ENCODE measurements at regions of chr4 and their contacts with region 1.

Region 1: GRCh38 chr4:173457893-173458292 is 59.0 kb upstream of the SCRG1 start:
- DNase-seq: no peak
- H3K4me3 ChIP-seq: no peak overlapping the region
- H3K27ac ChIP-seq: no peak overlapping the region
- H3K4me1 ChIP-seq: no peaks in the 10 kb centered on the region
- H3K27me3 ChIP-seq: no peaks in the 10 kb centered on the region
- CTCF ChIP-seq: no peak
- POLR2A ChIP-seq: no peak

Region 2: DNA sequence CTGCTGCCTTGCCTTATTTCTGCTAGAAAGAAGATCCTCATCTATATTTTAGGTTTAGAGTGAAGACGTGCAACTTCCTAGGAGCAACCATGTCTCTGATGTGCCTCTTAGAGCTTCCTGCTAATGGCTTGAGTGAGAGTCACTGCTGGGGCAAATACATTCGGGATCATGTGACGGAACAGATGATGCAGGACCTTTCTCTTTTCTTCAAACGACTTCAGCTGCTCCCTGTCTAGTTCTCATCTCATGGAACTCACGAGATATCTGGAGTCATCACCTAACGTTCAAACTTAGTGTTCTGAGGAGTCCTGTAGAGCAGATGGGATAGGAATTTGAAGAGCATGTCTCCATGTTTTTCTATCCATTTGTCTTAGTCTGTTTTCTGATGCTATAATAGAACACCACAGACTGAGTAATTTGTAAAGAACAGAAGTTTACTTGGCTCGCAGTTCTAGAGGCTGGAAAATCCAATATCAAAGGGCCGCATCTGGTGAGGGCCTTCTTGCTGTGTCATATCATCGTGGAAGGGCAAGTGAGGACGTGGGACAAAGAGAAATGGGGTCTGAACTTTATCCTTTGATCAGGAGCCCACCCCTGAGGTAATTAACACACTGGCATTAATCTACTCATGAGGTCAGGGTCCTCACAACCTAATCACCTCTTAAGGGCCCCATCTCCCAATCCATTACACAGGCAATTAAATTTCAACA is 15.5 kb before region 1 on chr4:
- CTCF ChIA-PET with region 1: no interaction called
- POLR2A ChIA-PET with region 1: no interaction called
- dilution Hi-C with region 1: no loop called
- intact Hi-C with region 1: loop called (anchors 2 kb)
- DNase-seq: no peak
- H3K4me3 ChIP-seq: no peak overlapping the region
- H3K27ac ChIP-seq: no peak overlapping the region
- H3K4me1 ChIP-seq: no peaks in the 10 kb centered on the region
- H3K27me3 ChIP-seq: no peaks in the 10 kb centered on the region
- CTCF ChIP-seq: no peak
- POLR2A ChIP-seq: no peak

Measured in endothelial cell of umbilical vein (primary cell).